ENCODE measurements at regions of chr5 and their contacts with region 1.

Region 1: GRCh38 chr5:39217365-39218281 is 1.7 kb downstream of the FYB1 start:
- DNase-seq: no peak
- H3K4me3 ChIP-seq: peak overlapping the region in 1 of 4 donors; percentile 53
- H3K27ac ChIP-seq: peak overlapping the region in 3 of 4 donors; percentile 4 to 40 (median 13)
- H3K4me1 ChIP-seq: peaks cover 9 to 52% (median 19%) of the 10 kb centered on the region in 3 donors
- H3K27me3 ChIP-seq: no peaks in the 10 kb centered on the region
- CTCF ChIP-seq: peak; percentile 77 to 98 (median 94)
- POLR2A ChIP-seq: no peak

Region 2: DNA sequence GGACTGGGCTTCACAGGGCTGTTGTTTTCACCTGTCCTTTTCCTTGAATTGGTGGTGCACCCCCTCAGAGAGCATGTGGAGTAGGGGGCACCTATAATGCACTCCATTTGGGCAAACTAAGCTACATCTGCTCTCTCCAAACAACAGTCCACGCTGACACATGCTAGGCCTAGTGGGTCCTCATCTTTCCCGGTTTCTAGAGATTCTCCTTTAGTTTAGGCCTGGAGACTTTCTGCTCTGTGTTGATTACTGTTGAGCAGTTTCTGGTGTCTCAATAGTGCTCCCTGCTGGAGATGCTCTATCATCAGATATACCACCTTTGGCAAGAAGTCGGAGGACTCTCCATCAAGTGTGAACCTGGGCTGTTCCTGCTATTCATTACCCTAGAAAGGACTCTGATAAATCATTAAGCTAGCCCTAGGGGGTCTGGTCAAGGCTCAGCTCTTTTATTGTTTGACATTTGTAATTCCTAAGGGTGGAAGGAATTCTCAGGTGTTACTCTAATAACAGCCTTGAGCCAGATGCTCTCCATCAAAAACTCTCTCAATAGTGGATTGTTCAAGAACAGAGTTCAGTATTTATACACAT is 65.7 kb after region 1 on chr5:
- intact Hi-C with region 1: loop called (anchors 5 kb)
- DNase-seq: no peak
- H3K4me3 ChIP-seq: no peak overlapping the region
- H3K27ac ChIP-seq: no peak overlapping the region
- H3K4me1 ChIP-seq: peaks cover 0 to 6% (median 0%) of the 10 kb centered on the region in 3 donors
- H3K27me3 ChIP-seq: no peaks in the 10 kb centered on the region
- CTCF ChIP-seq: peak; percentile 38 to 80 (median 61)
- POLR2A ChIP-seq: no peak

Region 3: DNA sequence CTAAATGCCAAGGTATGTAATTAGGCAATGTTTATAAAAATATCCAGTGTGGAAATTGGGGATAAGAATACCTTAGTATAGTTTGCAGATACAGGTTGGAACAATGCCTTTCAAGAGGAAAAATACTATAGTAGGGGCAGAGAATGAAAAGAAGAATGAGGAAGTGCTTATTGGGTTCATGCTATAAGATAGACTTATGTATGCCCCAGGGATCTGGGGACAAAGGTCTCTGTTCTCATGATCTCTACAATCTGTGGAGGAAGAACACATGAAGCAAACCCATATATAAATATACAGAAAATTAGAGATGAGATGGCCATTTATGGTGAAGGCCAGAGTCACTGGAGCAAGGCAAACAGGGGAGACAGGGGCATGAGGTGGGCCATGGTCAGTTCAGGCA is 313.7 kb after region 1 on chr5:
- intact Hi-C with region 1: no loop called
- DNase-seq: no peak
- H3K4me3 ChIP-seq: no peak overlapping the region
- H3K27ac ChIP-seq: no peak overlapping the region
- H3K4me1 ChIP-seq: peaks cover 0 to 11% (median 0%) of the 10 kb centered on the region in 3 donors
- H3K27me3 ChIP-seq: no peaks in the 10 kb centered on the region
- CTCF ChIP-seq: no peak
- POLR2A ChIP-seq: no peak